ENCODE measurements at regions of chr3 and their contacts with region 1.

Region 1: DNA sequence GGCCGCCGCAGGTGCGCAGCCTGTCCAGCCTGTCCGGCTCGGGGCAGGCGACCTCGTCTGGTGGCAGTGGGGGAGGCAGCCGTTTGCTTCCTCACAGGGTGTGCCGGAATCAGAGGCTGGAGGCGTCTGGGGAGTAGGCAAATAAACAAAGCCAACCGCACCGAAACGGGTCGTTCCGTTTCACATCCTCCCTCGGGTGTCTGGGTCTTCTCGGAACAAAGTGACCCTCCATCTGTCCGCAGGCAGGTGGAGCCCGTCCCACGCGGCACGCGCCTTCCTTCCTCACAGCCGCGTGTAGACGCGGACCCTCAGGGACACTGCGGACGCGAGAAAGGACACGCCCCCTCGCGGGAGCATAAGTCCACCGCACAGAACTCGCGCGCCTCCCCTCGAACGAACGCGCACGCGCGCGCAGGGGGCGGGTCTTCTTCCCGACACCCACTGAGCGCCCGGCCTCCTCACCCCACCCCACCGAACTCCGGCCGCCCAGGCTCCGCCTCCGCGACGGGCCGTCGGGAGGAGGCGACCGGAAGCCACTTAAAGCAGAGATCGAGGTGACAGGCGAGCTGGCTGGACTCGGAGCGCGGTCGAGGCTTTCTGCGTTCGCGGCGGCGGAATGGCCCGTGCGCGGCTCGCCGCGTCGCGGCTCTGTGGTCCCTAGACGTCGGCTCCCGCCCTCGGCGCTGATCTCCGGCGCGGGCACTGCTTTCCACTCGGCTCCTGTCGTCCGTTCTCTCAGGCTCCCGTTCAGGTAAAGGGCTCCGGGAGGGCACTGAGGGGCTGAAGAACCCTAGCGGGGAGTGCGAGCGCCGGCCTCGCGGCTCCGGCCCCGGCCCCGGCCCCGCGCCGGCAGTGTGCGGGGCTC is at the start of gene TIPARP:
- DNase-seq: peak; percentile 99
- H3K4me3 ChIP-seq: peak within 1 kb of the TSS; percentile 67 to 91
- H3K27ac ChIP-seq: peak within 1 kb of the TSS; percentile 95
- H3K4me1 ChIP-seq: peaks cover 25% of the 10 kb centered on the region
- H3K27me3 ChIP-seq: no peaks in the 10 kb centered on the region
- CTCF ChIP-seq: peak; percentile 29 to 69 (median 65)
- POLR2A ChIP-seq: peak; percentile 93 to 97
- total RNA-seq, gene TIPARP: 44.0 TPM

Region 2: DNA sequence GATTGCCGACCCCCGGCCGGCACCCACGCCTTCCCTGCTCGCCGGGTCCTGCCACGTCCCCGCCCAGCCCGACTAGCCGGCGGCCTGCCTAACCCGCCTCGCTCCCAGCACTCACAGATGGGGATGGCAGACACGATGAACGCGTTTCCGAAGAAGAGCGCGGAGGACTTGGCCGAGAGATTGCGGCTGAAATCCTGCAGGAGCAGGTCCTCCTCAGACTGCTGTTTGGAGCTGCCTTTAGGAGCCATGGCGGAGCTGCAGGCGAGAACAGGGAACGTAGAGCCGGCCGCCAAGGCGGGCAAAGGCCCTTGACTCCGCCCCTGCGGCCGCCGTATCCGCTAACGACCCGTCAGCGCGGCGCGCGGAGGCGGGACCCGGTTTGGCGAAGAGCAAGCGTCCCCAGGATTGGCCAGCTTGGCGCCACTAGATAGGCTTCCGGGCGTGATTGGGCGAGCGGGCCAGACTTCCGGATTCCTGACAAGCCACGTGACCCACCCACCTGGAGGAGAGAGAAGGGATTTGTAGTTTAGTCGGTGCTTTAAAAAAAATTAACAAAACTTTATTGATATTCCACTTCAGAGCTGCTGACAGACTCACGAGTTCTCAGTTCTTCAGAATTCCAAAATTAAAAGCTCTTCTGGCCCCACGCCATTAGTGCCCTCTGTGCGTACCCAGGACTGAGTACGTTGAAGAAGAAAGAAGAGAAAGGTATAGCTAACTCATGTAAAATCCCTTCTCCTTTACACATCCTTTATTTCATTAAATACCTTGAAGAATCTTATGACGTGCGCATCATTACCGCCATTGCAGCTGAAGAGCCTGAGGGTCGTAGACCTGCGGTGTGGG is 119.2 kb before region 1 on chr3 and contains the start of gene SSR3:
- intact Hi-C with region 1: loop called (anchors 5 kb)
- DNase-seq: peak; percentile 98 to 99
- H3K4me3 ChIP-seq: peak within 1 kb of the TSS; percentile 79 to 85
- H3K27ac ChIP-seq: peak within 1 kb of the TSS; percentile 76
- H3K4me1 ChIP-seq: peaks cover 45% of the 10 kb centered on the region
- H3K27me3 ChIP-seq: no peaks in the 10 kb centered on the region
- CTCF ChIP-seq: peak in 1 of 3 experiments; percentile 64
- POLR2A ChIP-seq: peak in 1 of 2 donors; percentile 60
- total RNA-seq, gene SSR3: 68.0 TPM

Region 3: GRCh38 chr3:156826144-156826895 is 152.0 kb after region 1 on chr3 and contains the start of gene LEKR1:
- intact Hi-C with region 1: loop called (anchors 10 kb)
- DNase-seq: no peak
- H3K4me3 ChIP-seq: peak within 1 kb of the TSS; percentile 65 to 75
- H3K27ac ChIP-seq: peak within 1 kb of the TSS; percentile 88
- H3K4me1 ChIP-seq: peaks cover 6% of the 10 kb centered on the region
- H3K27me3 ChIP-seq: no peaks in the 10 kb centered on the region
- CTCF ChIP-seq: no peak
- POLR2A ChIP-seq: peak in 1 of 2 donors; percentile 48
- total RNA-seq, gene LEKR1: not detected

Region 4: DNA sequence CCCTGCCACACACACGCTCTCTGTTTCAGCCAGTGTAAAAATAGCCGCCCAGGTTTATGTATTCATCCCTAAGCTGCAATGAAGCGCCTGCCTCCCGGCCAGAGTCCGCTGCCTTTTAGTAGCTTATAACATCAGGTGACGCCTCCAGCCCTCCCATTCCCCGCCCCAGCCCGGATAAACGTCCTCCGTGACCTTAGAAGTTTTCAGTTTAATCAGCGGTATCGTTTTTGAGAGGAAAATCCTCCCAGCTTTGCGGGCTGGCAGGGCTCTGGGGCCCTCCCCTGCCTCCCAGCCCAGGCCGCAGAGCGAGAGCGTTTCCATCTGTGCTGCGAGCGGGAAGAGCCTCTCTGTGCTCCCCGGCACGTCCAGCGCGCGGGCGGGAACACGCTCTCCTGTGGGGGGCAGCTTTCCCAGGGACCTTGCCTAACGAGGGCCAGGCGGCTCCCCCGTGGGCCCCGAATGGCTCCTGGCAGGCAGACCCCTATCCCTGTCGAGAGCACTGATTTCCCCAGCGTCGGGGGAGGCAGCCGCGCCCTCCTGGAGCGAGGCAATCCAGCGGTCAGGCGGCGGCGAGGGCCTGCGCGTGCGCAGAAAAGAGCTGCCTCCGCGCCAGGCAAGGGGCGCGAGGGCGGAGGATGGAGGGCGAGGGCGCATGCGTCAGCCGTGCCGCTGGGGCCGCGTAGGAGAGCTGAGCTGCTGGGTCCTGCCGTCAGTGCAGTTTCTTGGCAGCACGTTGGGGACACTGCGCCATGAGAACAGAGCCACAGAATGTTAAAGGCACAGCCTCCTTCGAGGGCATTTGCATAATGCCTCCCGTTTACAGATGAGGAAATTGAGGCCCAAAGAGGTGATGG is 414.6 kb after region 1 on chr3:
- intact Hi-C with region 1: loop called (anchors 2 kb)
- DNase-seq: peak in 1 of 2 donors; percentile 99
- H3K4me3 ChIP-seq: peak overlapping the region; percentile 55 to 76
- H3K27ac ChIP-seq: peak overlapping the region; percentile 96
- H3K4me1 ChIP-seq: peaks cover 36% of the 10 kb centered on the region
- H3K27me3 ChIP-seq: no peaks in the 10 kb centered on the region
- CTCF ChIP-seq: no peak
- POLR2A ChIP-seq: peak in 1 of 2 donors; percentile 65

Region 5: GRCh38 chr3:157130467-157131251 is 456.4 kb after region 1 on chr3:
- intact Hi-C with region 1: loop called (anchors 5 kb)
- DNase-seq: no peak
- H3K4me3 ChIP-seq: peak overlapping the region in 1 of 2 donors; percentile 17
- H3K27ac ChIP-seq: peak overlapping the region; percentile 67
- H3K4me1 ChIP-seq: peaks cover 33% of the 10 kb centered on the region
- H3K27me3 ChIP-seq: no peaks in the 10 kb centered on the region
- CTCF ChIP-seq: peak in 2 of 3 experiments; percentile 35 to 72
- POLR2A ChIP-seq: no peak

Region 6: GRCh38 chr3:157174649-157175498 is 500.6 kb after region 1 on chr3:
- intact Hi-C with region 1: no loop called
- DNase-seq: peak in 1 of 2 donors; percentile 100
- H3K4me3 ChIP-seq: peak overlapping the region; percentile 56 to 59
- H3K27ac ChIP-seq: peak overlapping the region; percentile 95
- H3K4me1 ChIP-seq: peaks cover 14% of the 10 kb centered on the region
- H3K27me3 ChIP-seq: no peaks in the 10 kb centered on the region
- CTCF ChIP-seq: no peak
- POLR2A ChIP-seq: peak in 1 of 2 donors; percentile 94

Measured in vagina (tissue), 2 donors.